H1 (cell line): ENCODE measurements at regions of chr14 and their contacts with region 1.

Region 1: GRCh38 chr14:73026845-73027542 is at the start of gene ZFYVE1:
- DNase-seq: peak; percentile 89 to 98
- H3K4me3 ChIP-seq: peak within 1 kb of the TSS; percentile 51 to 87 (median 74)
- H3K27ac ChIP-seq: peak within 1 kb of the TSS; percentile 20; the same call in 1 of the 2 replicates
- H3K4me1 ChIP-seq: no peaks in the 10 kb centered on the region; a peak in 1 of 7 replicates
- H3K27me3 ChIP-seq: no peaks in the 10 kb centered on the region
- CTCF ChIP-seq: no peak
- EP300 ChIP-seq: no peak
- POLR2A ChIP-seq: peak in 1 of 2 experiments; percentile 65; a peak in 2 of 3 replicates
- RAD21 ChIP-seq: no peak
- total RNA-seq, gene ZFYVE1: 12.5 and 13.9 TPM in 2 replicates

Region 2: GRCh38 chr14:72850360-72850759 is 176.6 kb before region 1 on chr14:
- CTCF ChIA-PET with region 1: no interaction called
- POLR2A ChIA-PET with region 1: no interaction called
- DNase-seq: no peak
- H3K4me3 ChIP-seq: no peak overlapping the region
- H3K27ac ChIP-seq: no peak overlapping the region
- H3K4me1 ChIP-seq: peaks cover 0 to 4% (median 1%) of the 10 kb centered on the region in 4 experiments; a peak in 3 of 7 replicates
- H3K27me3 ChIP-seq: no peaks in the 10 kb centered on the region
- CTCF ChIP-seq: no peak
- EP300 ChIP-seq: no peak
- POLR2A ChIP-seq: no peak
- RAD21 ChIP-seq: no peak

Region 3: DNA sequence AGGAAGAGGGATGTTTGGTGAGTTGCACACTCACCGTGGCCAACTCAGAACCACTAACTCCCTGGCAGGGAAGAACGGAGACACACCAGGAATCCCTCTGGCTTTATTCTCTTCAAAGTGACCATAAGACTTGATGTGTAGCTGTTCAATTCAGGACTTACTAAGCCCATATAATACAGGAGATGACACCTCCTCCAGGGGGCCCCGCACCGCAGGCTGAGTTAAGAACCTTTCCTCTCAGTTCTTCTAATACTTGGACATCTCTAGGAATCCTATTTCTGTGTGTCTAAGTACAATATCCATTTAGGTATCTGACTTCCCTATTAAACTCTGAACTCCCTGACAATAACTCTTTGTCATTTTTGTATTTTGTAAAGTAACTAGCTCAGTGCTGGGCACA is 51.2 kb before region 1 on chr14:
- CTCF ChIA-PET with region 1: interaction called, 10 read pairs
- POLR2A ChIA-PET with region 1: interaction called, 3 read pairs
- DNase-seq: no peak
- H3K4me3 ChIP-seq: no peak overlapping the region
- H3K27ac ChIP-seq: no peak overlapping the region
- H3K4me1 ChIP-seq: peaks cover under 1 to 5% (median 1%) of the 10 kb centered on the region in 4 experiments; a peak in 4 of 7 replicates
- H3K27me3 ChIP-seq: no peaks in the 10 kb centered on the region
- CTCF ChIP-seq: peak; percentile 13 to 27 (median 14); a peak in 3 of 4 replicates
- EP300 ChIP-seq: no peak
- POLR2A ChIP-seq: no peak
- RAD21 ChIP-seq: peak; percentile 32 to 51; a peak in 3 of 4 replicates

Region 4: DNA sequence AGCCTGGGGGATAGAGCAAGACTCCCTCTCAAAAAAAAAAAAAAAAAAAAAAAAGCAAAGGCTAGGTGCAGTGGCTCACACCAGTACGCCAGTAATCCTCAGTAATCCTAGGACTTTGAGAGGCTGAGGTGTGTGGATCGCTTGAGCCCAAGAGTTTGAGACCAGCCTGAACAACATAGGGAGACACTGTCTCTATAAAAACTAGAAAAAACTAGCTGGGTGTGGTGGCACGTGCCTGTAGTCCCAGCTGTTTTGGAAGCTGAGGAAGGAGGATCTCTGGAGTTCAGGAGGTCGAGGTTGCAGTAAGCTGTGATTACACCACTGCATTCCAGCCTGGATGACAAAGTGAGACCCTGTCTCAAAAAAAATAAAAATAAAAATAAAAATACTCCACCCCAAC is 22.4 kb after region 1 on chr14:
- CTCF ChIA-PET with region 1: interaction called, 38 read pairs
- POLR2A ChIA-PET with region 1: interaction called, 5 read pairs
- DNase-seq: no peak
- H3K4me3 ChIP-seq: no peak overlapping the region
- H3K27ac ChIP-seq: no peak overlapping the region
- H3K4me1 ChIP-seq: no peaks in the 10 kb centered on the region
- H3K27me3 ChIP-seq: no peaks in the 10 kb centered on the region
- CTCF ChIP-seq: no peak
- EP300 ChIP-seq: no peak
- POLR2A ChIP-seq: no peak
- RAD21 ChIP-seq: no peak